ENCODE measurements at regions of chr10 and their contacts with region 1.

Region 1: DNA sequence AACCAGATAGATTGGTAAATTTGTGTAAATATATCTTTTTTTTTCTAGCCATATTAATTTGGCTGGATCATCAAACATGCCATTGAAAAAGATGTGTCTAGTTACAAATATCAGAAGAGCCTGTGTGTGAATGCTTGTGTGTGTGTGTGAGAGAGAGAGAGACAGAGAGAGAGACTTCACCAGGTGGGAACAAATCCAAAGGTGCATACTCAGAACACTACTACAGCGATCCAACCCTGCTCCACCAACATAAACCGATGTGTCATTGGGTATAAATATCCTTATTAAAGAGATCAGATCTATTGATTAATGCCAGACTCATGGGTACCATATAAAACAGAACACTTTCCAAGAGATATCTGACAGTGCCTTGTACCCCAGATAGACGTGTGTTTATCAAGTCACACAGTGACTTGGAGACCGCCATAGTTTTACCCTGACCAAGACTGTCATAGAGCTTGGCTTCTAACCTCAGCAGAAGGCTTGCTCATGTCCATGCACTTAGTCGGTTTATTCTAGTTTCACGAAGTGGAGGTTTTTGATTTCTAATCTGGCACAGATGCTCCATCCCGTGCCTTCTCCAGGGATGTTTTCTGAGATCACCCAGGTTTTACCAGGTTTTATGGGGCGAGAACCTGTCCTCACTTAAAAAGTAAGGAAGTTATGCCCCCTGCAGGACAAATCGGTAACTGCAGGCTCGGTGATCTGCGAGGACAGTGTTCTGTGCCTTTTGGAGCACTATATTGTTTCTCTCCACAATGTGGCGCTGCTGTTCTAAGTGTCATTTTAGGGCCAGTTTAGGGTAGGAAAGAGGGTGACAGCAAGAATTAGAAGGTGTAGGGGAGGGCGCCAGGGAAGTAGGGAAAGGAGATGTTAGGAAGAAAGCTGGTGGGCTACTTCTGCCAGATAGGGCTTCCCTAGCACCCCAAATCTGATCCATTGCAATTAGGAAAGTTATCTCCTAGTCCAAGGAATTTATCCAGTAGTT is 29.3 kb upstream of the WNT8B start:
- DNase-seq: peak; percentile 83
- H3K4me3 ChIP-seq: no peak overlapping the region
- H3K27ac ChIP-seq: no peak overlapping the region
- H3K4me1 ChIP-seq: peaks cover 5% of the 10 kb centered on the region
- H3K27me3 ChIP-seq: no peaks in the 10 kb centered on the region
- CTCF ChIP-seq: peak; percentile 97 to 100

Region 2: GRCh38 chr10:100303724-100304319 is 129.7 kb before region 1 on chr10:
- CTCF ChIA-PET with region 1: no interaction called
- dilution Hi-C with region 1: no loop called
- in situ Hi-C with region 1: no loop called
- intact Hi-C with region 1: loop called (anchors 1 kb)
- DNase-seq: peak; percentile 15
- H3K4me3 ChIP-seq: no peak overlapping the region
- H3K27ac ChIP-seq: no peak overlapping the region
- H3K4me1 ChIP-seq: no peaks in the 10 kb centered on the region
- H3K27me3 ChIP-seq: no peaks in the 10 kb centered on the region
- CTCF ChIP-seq: peak; percentile 70 to 76

Region 3: DNA sequence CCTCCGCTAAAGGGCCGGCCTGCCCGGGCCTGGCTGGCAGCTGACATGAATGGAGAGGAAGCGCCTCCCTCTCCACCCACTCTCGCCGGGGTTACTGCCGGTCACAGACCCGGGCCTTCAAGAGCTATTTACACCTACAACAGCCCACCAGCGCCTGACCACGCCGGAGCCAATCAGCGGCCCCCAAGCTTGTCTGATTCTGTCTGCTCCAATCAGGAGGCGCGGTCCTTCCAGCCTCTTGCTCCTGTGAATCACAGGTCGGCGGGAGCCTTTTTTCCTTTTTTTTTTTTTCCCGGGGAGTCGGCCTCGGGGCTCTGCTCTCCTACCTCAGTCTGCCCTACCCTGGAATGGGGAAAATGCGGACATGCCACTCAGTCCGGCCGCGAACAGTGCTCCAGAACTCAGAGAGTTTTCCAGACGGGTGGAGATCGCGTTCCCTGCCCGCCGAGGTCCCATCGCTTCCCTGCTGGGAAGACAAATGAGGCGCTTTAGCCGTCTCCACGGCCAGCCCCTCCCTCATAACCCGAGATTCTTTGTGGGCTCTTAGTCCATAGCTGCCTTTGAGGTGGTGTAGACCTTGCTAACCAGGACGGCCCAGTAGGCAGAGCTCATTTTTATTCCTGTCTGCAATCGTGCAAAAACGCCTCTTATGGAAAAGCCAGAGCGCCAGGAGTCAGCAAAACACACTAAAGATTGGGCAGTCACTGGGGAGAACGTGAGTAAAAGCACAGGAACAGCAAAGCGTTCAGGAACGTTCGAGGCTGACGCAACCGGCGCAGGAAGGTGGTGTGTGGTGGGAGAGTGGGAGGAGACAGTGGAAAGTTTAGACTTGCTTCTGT is 60.0 kb before region 1 on chr10:
- CTCF ChIA-PET with region 1: no interaction called
- dilution Hi-C with region 1: no loop called
- in situ Hi-C with region 1: no loop called
- intact Hi-C with region 1: loop called (anchors 1 kb)
- DNase-seq: peak; percentile 100
- H3K4me3 ChIP-seq: peak overlapping the region; percentile 48 to 63 (median 56)
- H3K27ac ChIP-seq: peak overlapping the region; percentile 99
- H3K4me1 ChIP-seq: peaks cover 56% of the 10 kb centered on the region
- H3K27me3 ChIP-seq: no peaks in the 10 kb centered on the region
- CTCF ChIP-seq: no peak

Region 4: DNA sequence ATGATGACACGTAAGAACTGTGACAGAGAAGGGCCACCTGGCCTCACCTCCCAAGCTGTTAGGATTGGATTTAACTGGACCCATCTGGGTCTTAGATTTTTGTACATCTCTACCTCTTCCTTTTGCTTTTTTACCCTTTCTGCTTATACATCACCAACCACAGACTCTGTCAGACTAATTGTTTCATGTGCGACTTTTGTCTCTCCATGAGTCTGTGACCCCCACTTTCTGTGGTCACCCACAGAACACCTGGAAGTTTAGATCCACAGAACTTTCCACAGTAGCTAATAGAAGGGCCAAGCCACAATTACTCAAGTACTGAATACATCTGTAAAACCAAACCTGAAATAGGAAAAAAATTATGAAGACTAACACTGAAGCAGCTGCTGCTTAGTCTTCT is 63.0 kb after region 1 on chr10:
- CTCF ChIA-PET with region 1: no interaction called
- dilution Hi-C with region 1: loop called (anchors 5 kb)
- in situ Hi-C with region 1: no loop called
- intact Hi-C with region 1: no loop called
- DNase-seq: no peak
- H3K4me3 ChIP-seq: no peak overlapping the region
- H3K27ac ChIP-seq: no peak overlapping the region
- H3K4me1 ChIP-seq: no peaks in the 10 kb centered on the region
- H3K27me3 ChIP-seq: no peaks in the 10 kb centered on the region
- CTCF ChIP-seq: no peak

Region 5: GRCh38 chr10:100518761-100519241 is 85.3 kb after region 1 on chr10:
- CTCF ChIA-PET with region 1: no interaction called
- dilution Hi-C with region 1: no loop called
- in situ Hi-C with region 1: no loop called
- intact Hi-C with region 1: loop called (anchors 1 kb)
- DNase-seq: peak; percentile 63
- H3K4me3 ChIP-seq: no peak overlapping the region
- H3K27ac ChIP-seq: no peak overlapping the region
- H3K4me1 ChIP-seq: peaks cover 35% of the 10 kb centered on the region
- H3K27me3 ChIP-seq: no peaks in the 10 kb centered on the region
- CTCF ChIP-seq: peak; percentile 73 to 81

Region 6: DNA sequence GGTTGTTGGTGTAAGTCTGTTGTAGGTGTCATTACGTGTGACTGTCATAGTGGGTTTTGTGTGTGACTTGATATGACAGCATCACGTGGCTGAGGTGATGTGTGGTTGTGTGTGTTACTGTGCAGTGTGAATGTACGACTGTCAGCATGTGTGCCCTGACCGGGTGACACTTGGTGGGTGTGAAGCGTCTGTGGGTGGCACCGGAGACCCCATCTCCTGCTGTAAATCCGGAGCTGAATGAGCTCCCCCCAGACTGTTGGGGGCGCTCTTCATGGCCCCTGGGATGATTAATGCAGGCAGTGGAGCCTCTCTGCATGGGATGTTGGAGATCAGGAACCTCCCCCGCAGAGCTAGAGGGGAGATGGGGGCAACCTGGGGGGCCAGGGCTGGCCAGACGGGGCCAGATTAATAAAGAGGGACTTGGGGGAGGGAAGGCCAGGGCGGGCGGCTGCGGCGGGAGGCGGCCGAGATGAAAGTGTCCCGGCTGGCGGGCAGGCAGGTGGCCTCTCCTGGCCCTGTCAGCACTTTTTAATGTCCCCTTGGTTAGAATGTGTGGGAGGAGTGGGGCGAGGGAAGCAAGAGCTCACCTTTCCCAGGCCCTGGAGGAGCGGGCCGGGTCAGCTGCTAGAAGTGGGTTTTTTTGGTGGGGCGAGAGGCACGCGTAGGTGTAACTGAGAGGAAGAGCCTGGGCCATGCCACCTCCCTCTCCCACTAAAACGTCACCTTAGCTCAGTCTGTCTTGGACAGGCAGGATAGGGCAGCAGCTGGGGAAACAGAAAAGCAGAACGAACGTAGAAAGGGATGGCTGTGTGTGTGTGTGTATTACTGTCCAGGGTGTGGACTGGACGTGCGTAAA is 136.3 kb after region 1 on chr10:
- CTCF ChIA-PET with region 1: no interaction called
- dilution Hi-C with region 1: no loop called
- in situ Hi-C with region 1: no loop called
- intact Hi-C with region 1: no loop called
- DNase-seq: no peak
- H3K4me3 ChIP-seq: no peak overlapping the region
- H3K27ac ChIP-seq: no peak overlapping the region
- H3K4me1 ChIP-seq: no peaks in the 10 kb centered on the region
- H3K27me3 ChIP-seq: no peaks in the 10 kb centered on the region
- CTCF ChIP-seq: no peak

Region 7: GRCh38 chr10:100614429-100615095 is 181.0 kb after region 1 on chr10:
- CTCF ChIA-PET with region 1: no interaction called
- dilution Hi-C with region 1: no loop called
- in situ Hi-C with region 1: no loop called
- intact Hi-C with region 1: no loop called
- DNase-seq: no peak
- H3K4me3 ChIP-seq: no peak overlapping the region
- H3K27ac ChIP-seq: no peak overlapping the region
- H3K4me1 ChIP-seq: no peaks in the 10 kb centered on the region
- H3K27me3 ChIP-seq: peaks cover 3% of the 10 kb centered on the region
- CTCF ChIP-seq: no peak

Region 8: GRCh38 chr10:100878291-100878910 is 444.9 kb after region 1 on chr10:
- CTCF ChIA-PET with region 1: no interaction called
- dilution Hi-C with region 1: no loop called
- in situ Hi-C with region 1: no loop called
- intact Hi-C with region 1: loop called (anchors 1 kb)
- DNase-seq: peak; percentile 46
- H3K4me3 ChIP-seq: no peak overlapping the region
- H3K27ac ChIP-seq: no peak overlapping the region
- H3K4me1 ChIP-seq: no peaks in the 10 kb centered on the region
- H3K27me3 ChIP-seq: no peaks in the 10 kb centered on the region
- CTCF ChIP-seq: peak; percentile 61 to 89

Measured in mammary epithelial cell (primary cell).